ENCODE measurements at regions of chr1 and their contacts with region 1.

Region 1: GRCh38 chr1:44721485-44722361 is 9.2 kb downstream of the RNU5D-1 start:
- DNase-seq: peak; percentile 91 to 98 (median 94)
- ATAC-seq: peak; percentile 97
- H3K4me3 ChIP-seq: no peak overlapping the region
- H3K27ac ChIP-seq: peak overlapping the region; percentile 95
- H3K4me1 ChIP-seq: peaks cover 17 to 24% of the 10 kb centered on the region in 2 experiments
- H3K27me3 ChIP-seq: peaks cover 2 to 12% of the 10 kb centered on the region in 2 experiments; a peak in 4 of 5 replicates
- CTCF ChIP-seq: no peak; a peak in 2 of 6 replicates
- EP300 ChIP-seq: peak; percentile 86
- POLR2A ChIP-seq: peak; percentile 100
- RAD21 ChIP-seq: peak in 1 of 2 experiments; percentile 56; a peak in 2 of 4 replicates

Region 2: DNA sequence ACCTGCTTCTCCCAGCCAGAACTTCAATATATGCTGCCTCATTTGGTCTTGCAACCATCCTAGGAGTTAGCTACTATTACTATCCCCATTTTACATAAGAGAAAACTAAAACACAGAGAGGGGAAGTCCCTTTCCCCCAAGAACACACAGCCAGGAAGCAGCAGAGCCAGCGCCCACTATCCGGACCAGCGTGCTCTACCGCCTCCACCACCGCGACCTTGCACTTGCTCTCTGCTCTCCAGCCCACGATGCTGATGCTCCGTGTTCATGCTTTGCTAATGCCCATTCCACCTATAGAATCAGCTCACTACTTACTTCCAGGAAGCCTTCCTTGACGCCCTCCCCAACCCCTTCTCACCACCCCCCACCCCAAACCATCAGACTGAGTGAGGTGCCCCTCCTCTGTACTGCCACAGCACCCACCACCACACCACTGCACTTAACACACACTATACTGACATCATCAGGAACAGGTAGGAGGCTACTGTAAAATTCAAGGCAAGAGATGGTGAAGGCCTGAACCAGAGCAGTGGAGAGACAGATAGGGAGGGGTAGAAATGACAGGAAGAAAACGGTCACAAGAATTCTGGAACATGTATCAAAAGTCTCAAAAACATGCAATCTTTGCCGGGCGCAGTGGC is 56.9 kb before region 1 on chr1:
- CTCF ChIA-PET with region 1: no interaction called
- POLR2A ChIA-PET with region 1: interaction called, 11 read pairs
- in situ Hi-C with region 1: no loop called
- intact Hi-C with region 1: no loop called
- DNase-seq: no peak
- ATAC-seq: no peak
- H3K4me3 ChIP-seq: no peak overlapping the region
- H3K27ac ChIP-seq: no peak overlapping the region
- H3K4me1 ChIP-seq: peaks cover 0 to 10% of the 10 kb centered on the region in 2 experiments; a peak in 2 of 5 replicates
- H3K27me3 ChIP-seq: no peaks in the 10 kb centered on the region
- CTCF ChIP-seq: no peak
- EP300 ChIP-seq: no peak
- POLR2A ChIP-seq: no peak
- RAD21 ChIP-seq: no peak

Region 3: GRCh38 chr1:44707959-44708831 is 13.5 kb before region 1 on chr1:
- CTCF ChIA-PET with region 1: no interaction called
- POLR2A ChIA-PET with region 1: interaction called, 44 read pairs
- in situ Hi-C with region 1: no loop called
- intact Hi-C with region 1: no loop called
- DNase-seq: peak; percentile 60 to 77 (median 64)
- ATAC-seq: peak; percentile 92
- H3K4me3 ChIP-seq: no peak overlapping the region
- H3K27ac ChIP-seq: no peak overlapping the region
- H3K4me1 ChIP-seq: peaks cover 0 to 4% of the 10 kb centered on the region in 2 experiments; a peak in 2 of 5 replicates
- H3K27me3 ChIP-seq: peaks cover 39% of the 10 kb centered on the region in 2 experiments
- CTCF ChIP-seq: peak; percentile 67 to 90 (median 81); a peak in 5 of 6 replicates
- EP300 ChIP-seq: no peak
- POLR2A ChIP-seq: no peak
- RAD21 ChIP-seq: peak; percentile 59 to 71

Region 4: GRCh38 chr1:44792783-44793714 is 71.3 kb after region 1 on chr1:
- CTCF ChIA-PET with region 1: no interaction called
- POLR2A ChIA-PET with region 1: interaction called, 18 read pairs
- in situ Hi-C with region 1: no loop called
- intact Hi-C with region 1: no loop called
- DNase-seq: no peak
- ATAC-seq: no peak
- H3K4me3 ChIP-seq: no peak overlapping the region
- H3K27ac ChIP-seq: no peak overlapping the region
- H3K4me1 ChIP-seq: peaks cover 16 to 20% of the 10 kb centered on the region in 2 experiments; a peak in 4 of 5 replicates
- H3K27me3 ChIP-seq: no peaks in the 10 kb centered on the region
- CTCF ChIP-seq: no peak
- EP300 ChIP-seq: no peak
- POLR2A ChIP-seq: no peak
- RAD21 ChIP-seq: no peak

Region 5: DNA sequence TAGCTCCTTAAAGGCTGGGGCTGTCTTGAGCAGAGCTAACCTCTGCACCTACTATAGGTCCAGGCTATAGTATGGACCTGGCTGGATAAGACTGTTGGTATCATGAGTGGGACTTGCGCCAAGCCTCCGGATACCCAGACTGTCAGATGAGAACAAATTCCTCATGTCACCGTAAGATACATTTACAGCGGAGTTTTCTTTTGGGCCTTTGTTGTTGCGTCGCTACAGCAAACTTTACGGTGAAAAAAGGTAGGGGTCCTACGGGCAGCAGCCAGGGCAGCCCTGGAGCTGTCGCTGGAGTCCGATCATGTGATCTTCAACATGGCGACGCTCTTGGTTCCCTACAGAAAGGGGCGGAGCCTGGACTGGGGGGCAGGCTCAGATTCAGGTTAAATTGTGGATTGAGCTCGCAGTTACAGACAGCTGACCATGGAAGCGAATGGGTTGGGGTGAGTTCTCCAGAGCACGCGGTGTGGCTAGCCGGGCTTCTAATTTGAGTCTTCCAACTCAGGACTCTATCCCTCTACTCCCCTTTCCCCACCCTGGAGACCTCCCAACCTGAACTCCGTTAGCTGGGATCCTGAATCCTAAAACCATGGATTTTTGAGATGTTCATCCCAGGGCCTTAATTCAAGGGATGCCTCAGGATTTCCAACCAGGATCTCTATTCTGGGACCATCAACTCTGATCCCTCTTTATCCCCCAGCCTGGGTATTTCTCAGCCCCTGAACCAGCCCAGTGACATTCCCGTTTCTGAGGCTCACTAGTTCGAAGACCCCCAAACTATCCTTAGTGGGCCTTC is 290.3 kb after region 1 on chr1 and contains the start of gene UROD:
- CTCF ChIA-PET with region 1: no interaction called
- POLR2A ChIA-PET with region 1: interaction called, 44 read pairs
- in situ Hi-C with region 1: no loop called
- intact Hi-C with region 1: no loop called
- DNase-seq: peak; percentile 95 to 100 (median 96)
- ATAC-seq: peak; percentile 73
- H3K4me3 ChIP-seq: peak within 1 kb of the TSS; percentile 86
- H3K27ac ChIP-seq: peak within 1 kb of the TSS; percentile 85
- H3K4me1 ChIP-seq: peaks cover 44 to 45% of the 10 kb centered on the region in 2 experiments
- H3K27me3 ChIP-seq: no peaks in the 10 kb centered on the region
- CTCF ChIP-seq: no peak
- EP300 ChIP-seq: peak; percentile 72; the same call in 1 of the 2 replicates
- POLR2A ChIP-seq: peak; percentile 98
- RAD21 ChIP-seq: peak in 1 of 2 experiments; percentile 5; a peak in 1 of 4 replicates
- polyA plus RNA-seq, gene UROD: 2,545 to 2,933 TPM

Region 6: DNA sequence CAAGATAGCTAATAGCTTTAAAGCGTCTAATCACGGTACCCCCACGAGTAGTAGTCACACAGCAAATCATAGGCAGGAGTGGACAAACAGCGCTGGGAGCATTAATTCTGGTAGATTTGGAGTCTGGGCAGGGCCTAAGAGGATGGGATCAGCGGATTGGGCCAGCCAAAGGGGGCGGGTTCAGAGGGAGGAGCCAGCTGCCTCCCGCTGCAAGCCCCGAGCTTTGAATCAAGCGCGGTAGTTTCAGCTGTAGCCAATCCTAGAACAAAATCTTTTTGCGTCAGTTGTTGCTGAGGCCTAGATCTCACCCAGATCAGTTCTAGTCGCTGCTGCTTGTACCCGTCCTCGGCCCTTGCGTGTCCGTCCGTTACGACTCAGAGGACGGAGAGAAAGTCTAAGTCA is 861.5 kb after region 1 on chr1:
- CTCF ChIA-PET with region 1: no interaction called
- POLR2A ChIA-PET with region 1: interaction called, 15 read pairs
- in situ Hi-C with region 1: no loop called
- intact Hi-C with region 1: no loop called
- DNase-seq: peak; percentile 98 to 100 (median 98)
- ATAC-seq: peak; percentile 91
- H3K4me3 ChIP-seq: peak overlapping the region; percentile 88
- H3K27ac ChIP-seq: peak overlapping the region; percentile 97
- H3K4me1 ChIP-seq: peaks cover 6 to 21% of the 10 kb centered on the region in 2 experiments; a peak in 4 of 5 replicates
- H3K27me3 ChIP-seq: no peaks in the 10 kb centered on the region
- CTCF ChIP-seq: no peak
- EP300 ChIP-seq: no peak
- POLR2A ChIP-seq: no peak
- RAD21 ChIP-seq: no peak

Measured in K562 (cell line).